ENCODE measurements at regions of chr11 and their contacts with region 1.

Region 1: DNA sequence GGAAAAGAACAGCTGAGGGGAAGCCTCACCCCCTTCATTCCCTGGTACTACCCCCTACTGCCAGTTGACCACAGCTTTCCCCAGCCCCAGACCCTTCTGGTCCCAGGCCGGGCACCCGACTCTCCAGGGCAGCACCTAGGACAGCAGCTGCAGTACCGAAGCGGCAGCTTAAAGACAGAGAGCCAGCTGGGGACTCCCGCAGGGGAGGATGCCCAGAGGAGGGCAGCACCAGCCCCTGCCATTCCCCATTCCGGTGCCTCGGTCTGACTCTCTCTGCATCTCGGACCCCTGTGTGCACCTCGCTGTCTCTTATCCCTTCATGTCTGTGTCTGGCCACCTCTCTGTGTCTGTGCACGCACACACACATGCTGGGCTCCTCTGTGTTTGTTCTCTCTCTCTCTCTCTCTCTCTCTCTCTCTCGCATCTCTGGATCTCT is 9.4 kb downstream of the IGSF9B start:
- DNase-seq: peak; percentile 49 to 76 (median 74)
- ATAC-seq: peak; percentile 66
- H3K4me3 ChIP-seq: peak overlapping the region; percentile 39
- H3K4me3 Mint-ChIP-seq: peak overlapping the region; percentile 50 to 97 (median 76)
- H3K27ac ChIP-seq: peak overlapping the region; percentile 44
- H3K27ac Mint-ChIP-seq: peak overlapping the region; percentile 60 to 94 (median 85)
- H3K4me1 ChIP-seq: peaks cover 50 to 60% of the 10 kb centered on the region in 2 donors
- H3K4me1 Mint-ChIP-seq: peaks cover 41 to 76% (median 64%) of the 10 kb centered on the region in 7 donors
- H3K27me3 ChIP-seq: no peaks in the 10 kb centered on the region
- H3K27me3 Mint-ChIP-seq: no peaks in the 10 kb centered on the region

Region 2: DNA sequence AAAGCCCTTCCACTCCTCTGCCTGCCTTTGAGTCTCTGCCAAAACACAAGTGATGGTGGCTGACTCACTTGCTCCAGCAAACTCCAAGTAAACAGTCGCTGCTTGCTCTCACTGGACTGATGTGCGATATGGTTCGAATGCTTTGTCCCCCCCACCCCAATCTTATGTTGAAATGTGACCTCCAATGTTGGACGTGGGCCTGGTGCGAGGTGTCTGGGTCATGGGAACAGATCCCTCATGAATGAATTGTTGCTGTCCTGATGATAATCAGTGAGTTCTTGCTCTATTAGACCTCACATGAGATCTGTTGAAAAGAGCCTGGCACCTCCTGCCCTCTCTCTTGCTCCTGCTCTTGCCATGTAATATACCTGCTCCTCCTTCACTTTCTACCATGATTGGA is 1162.9 kb before region 1 on chr11:
- CTCF ChIA-PET with region 1: no interaction called
- POLR2A ChIA-PET with region 1: no interaction called
- intact Hi-C with region 1: no loop called
- DNase-seq: no peak
- ATAC-seq: no peak
- H3K4me3 ChIP-seq: no peak overlapping the region
- H3K4me3 Mint-ChIP-seq: no peak overlapping the region
- H3K27ac ChIP-seq: no peak overlapping the region
- H3K27ac Mint-ChIP-seq: no peak overlapping the region
- H3K4me1 ChIP-seq: no peaks in the 10 kb centered on the region
- H3K4me1 Mint-ChIP-seq: no peaks in the 10 kb centered on the region
- H3K27me3 ChIP-seq: no peaks in the 10 kb centered on the region
- H3K27me3 Mint-ChIP-seq: no peaks in the 10 kb centered on the region

Region 3: GRCh38 chr11:133966921-133967598 is 19.7 kb after region 1 on chr11:
- CTCF ChIA-PET with region 1: interaction called, 4 read pairs
- POLR2A ChIA-PET with region 1: interaction called, 4 read pairs
- intact Hi-C with region 1: loop called (anchors 1 kb)
- DNase-seq: peak; percentile 49 to 71 (median 61)
- ATAC-seq: peak; percentile 77
- H3K4me3 ChIP-seq: peak overlapping the region; percentile 59
- H3K4me3 Mint-ChIP-seq: peak overlapping the region; percentile 81 to 93 (median 88)
- H3K27ac ChIP-seq: peak overlapping the region; percentile 36
- H3K27ac Mint-ChIP-seq: peak overlapping the region in 8 of 9 donors; percentile 20 to 93 (median 78)
- H3K4me1 ChIP-seq: no peaks in the 10 kb centered on the region
- H3K4me1 Mint-ChIP-seq: peaks cover 5 to 18% (median 13%) of the 10 kb centered on the region in 7 donors
- H3K27me3 ChIP-seq: no peaks in the 10 kb centered on the region
- H3K27me3 Mint-ChIP-seq: peaks cover 0 to 51% (median 5%) of the 10 kb centered on the region in 5 donors

Region 4: GRCh38 chr11:134050541-134051383 is 103.4 kb after region 1 on chr11:
- CTCF ChIA-PET with region 1: interaction called, 8 read pairs
- POLR2A ChIA-PET with region 1: no interaction called
- intact Hi-C with region 1: loop called in 1 of 2 experiments (anchors 1 kb)
- DNase-seq: peak; percentile 60 to 82 (median 71)
- ATAC-seq: peak; percentile 96
- H3K4me3 ChIP-seq: no peak overlapping the region
- H3K4me3 Mint-ChIP-seq: peak overlapping the region in 5 of 10 donors; percentile 13 to 51 (median 48)
- H3K27ac ChIP-seq: no peak overlapping the region
- H3K27ac Mint-ChIP-seq: peak overlapping the region in 3 of 9 donors; percentile 44 to 86 (median 70)
- H3K4me1 ChIP-seq: peaks cover 4% of the 10 kb centered on the region in 2 donors
- H3K4me1 Mint-ChIP-seq: peaks cover 0 to 14% (median 5%) of the 10 kb centered on the region in 7 donors
- H3K27me3 ChIP-seq: peaks cover 0 to 3% of the 10 kb centered on the region in 2 donors
- H3K27me3 Mint-ChIP-seq: peaks cover 14 to 26% (median 21%) of the 10 kb centered on the region in 5 donors

Region 5: DNA sequence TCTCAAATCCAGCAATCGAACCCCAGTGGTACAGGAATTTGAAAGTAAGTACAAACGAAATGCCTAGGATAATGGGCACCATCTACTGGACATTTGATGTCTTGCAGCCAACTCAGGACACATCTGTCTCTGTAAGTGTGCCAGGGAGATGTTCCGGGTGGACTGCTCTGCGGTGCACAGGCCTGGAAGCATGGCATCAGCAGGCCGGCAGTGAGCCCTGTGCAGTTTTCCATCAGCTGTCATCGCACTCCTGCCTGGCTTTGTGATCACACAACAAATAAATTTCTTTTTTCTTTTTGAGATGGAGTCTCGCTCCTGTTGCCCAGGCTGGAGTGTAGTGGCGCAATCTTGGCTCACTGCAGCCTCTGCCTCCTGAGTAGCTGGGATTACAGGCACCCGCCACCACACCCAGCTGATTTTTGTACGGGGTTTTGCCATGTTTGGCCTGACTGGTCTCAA is 192.6 kb after region 1 on chr11:
- CTCF ChIA-PET with region 1: interaction called, 5 read pairs
- POLR2A ChIA-PET with region 1: no interaction called
- intact Hi-C with region 1: loop called in 1 of 2 experiments (anchors 1 kb)
- DNase-seq: peak in 7 of 9 donors; percentile 15 to 55 (median 43)
- ATAC-seq: peak; percentile 72
- H3K4me3 ChIP-seq: no peak overlapping the region
- H3K4me3 Mint-ChIP-seq: no peak overlapping the region
- H3K27ac ChIP-seq: no peak overlapping the region
- H3K27ac Mint-ChIP-seq: no peak overlapping the region
- H3K4me1 ChIP-seq: no peaks in the 10 kb centered on the region
- H3K4me1 Mint-ChIP-seq: peaks cover 0 to 13% (median 3%) of the 10 kb centered on the region in 7 donors
- H3K27me3 ChIP-seq: no peaks in the 10 kb centered on the region
- H3K27me3 Mint-ChIP-seq: peaks cover 0 to under 1% (median 0%) of the 10 kb centered on the region in 5 donors

Region 6: DNA sequence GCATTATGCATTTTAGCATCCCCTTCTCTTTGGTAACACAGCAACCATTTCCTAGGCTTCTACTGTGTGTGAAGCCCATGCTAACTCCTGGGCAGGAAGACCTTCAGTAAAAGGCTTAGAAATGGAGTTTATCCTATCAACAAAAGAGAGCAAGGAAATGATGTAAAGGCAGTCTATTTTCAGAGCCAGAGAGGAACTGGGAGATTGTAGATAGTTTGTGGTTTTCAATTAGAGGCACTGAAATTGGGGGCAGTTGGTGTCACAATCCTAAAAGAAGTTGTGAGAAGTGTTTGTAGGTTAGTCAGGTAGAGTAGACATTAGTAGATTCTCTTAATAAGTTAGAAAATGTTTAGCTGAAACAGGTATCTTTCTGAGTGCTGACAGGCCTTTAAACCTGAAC is 313.2 kb after region 1 on chr11:
- CTCF ChIA-PET with region 1: no interaction called
- POLR2A ChIA-PET with region 1: no interaction called
- intact Hi-C with region 1: no loop called
- DNase-seq: no peak
- ATAC-seq: no peak
- H3K4me3 ChIP-seq: no peak overlapping the region
- H3K4me3 Mint-ChIP-seq: no peak overlapping the region
- H3K27ac ChIP-seq: no peak overlapping the region
- H3K27ac Mint-ChIP-seq: peak overlapping the region in 2 of 9 donors; percentile 44 to 65
- H3K4me1 ChIP-seq: no peaks in the 10 kb centered on the region
- H3K4me1 Mint-ChIP-seq: peaks cover 0 to 32% (median 7%) of the 10 kb centered on the region in 7 donors
- H3K27me3 ChIP-seq: no peaks in the 10 kb centered on the region
- H3K27me3 Mint-ChIP-seq: no peaks in the 10 kb centered on the region

Region 7: GRCh38 chr11:134331354-134332188 is 384.2 kb after region 1 on chr11 and contains the start of gene GLB1L2:
- CTCF ChIA-PET with region 1: no interaction called
- POLR2A ChIA-PET with region 1: no interaction called
- intact Hi-C with region 1: loop called in 1 of 2 experiments (anchors 5 kb)
- DNase-seq: peak; percentile 68 to 88 (median 78)
- ATAC-seq: peak; percentile 96
- H3K4me3 ChIP-seq: peak within 1 kb of the TSS; percentile 66
- H3K4me3 Mint-ChIP-seq: peak within 1 kb of the TSS; percentile 84 to 94 (median 88)
- H3K27ac ChIP-seq: no peak within 1 kb of the TSS
- H3K27ac Mint-ChIP-seq: peak within 1 kb of the TSS in 7 of 9 donors; percentile 25 to 89 (median 66)
- H3K4me1 ChIP-seq: peaks cover 7 to 9% of the 10 kb centered on the region in 2 donors
- H3K4me1 Mint-ChIP-seq: peaks cover 3 to 19% (median 17%) of the 10 kb centered on the region in 7 donors
- H3K27me3 ChIP-seq: no peaks in the 10 kb centered on the region
- H3K27me3 Mint-ChIP-seq: peaks cover 5 to 60% (median 9%) of the 10 kb centered on the region in 5 donors
- total RNA-seq, gene GLB1L2: 0.34 to 2.4 (median 1.7) TPM

Measured in naive thymus-derived CD4-positive, alpha-beta T cell (primary cell).